ENCODE measurements at regions of chr12 and their contacts with region 1.

Region 1: DNA sequence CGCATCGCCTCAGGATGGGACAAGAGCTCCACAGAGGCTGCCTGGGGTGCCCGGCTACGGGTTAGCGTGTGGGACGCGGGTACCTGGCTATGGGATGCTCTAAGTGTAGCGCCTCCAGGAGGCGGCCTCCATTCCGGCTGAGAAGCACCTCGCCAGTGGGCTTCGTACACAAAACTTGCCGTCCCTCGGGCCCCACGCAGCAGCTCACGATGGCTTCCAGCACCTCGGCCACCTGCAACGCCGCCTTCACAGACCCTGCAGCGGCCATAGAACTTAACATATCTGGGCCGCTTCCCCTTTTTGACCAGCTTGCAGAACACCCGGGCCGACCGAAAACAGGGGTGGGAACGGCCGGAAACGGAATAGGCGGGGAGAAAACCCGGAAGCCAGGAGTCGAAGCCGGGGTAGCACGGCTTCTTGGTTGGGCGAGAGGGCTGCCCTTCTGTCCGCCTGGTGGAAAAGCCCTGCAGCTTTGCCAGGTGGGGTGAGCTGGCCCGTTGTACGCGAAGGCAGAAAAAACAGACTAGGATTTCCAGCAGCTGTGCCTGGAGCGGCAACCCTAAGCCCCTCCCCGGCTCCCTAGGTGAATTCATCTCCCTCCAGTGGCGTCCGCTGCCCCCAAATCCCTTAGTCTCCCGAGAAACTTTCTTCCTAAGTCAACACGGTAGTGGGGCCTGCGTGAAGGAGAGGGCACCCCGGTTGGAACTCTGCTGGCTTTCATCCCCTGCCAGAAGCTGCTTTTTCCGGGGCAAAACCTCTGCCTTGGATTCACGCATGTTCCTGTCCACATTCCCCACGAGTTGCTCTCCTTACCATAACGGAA is at the start of gene BBS10:
- DNase-seq: peak; percentile 93
- ATAC-seq: peak; percentile 98 to 99
- total RNA-seq, gene BBS10: 6.5 to 9.4 TPM

Region 2: GRCh38 chr12:76083904-76084862 is 264.1 kb before region 1 on chr12 and contains the start of gene NAP1L1:
- intact Hi-C with region 1: loop called in 1 of 2 experiments (anchors 5 kb)
- DNase-seq: peak; percentile 99
- ATAC-seq: peak; percentile 95 to 97
- total RNA-seq, gene NAP1L1: 299 to 358 TPM

Region 3: GRCh38 chr12:76158518-76159321 is 189.6 kb before region 1 on chr12:
- intact Hi-C with region 1: loop called in 1 of 2 experiments (anchors 10 kb)
- DNase-seq: no peak
- ATAC-seq: peak; percentile 83 to 92

Region 4: GRCh38 chr12:76183459-76184186 is 164.7 kb before region 1 on chr12:
- intact Hi-C with region 1: loop called in 1 of 2 experiments (anchors 5 kb)
- DNase-seq: peak; percentile 56
- ATAC-seq: peak in 1 of 2 donors; percentile 88

Region 5: GRCh38 chr12:76559400-76560085 is 211.3 kb after region 1 on chr12 and contains the start of gene OSBPL8:
- intact Hi-C with region 1: loop called in 1 of 2 experiments (anchors 5 kb)
- DNase-seq: peak; percentile 96
- ATAC-seq: peak; percentile 97 to 98
- total RNA-seq, gene OSBPL8: 34.5 to 38.8 TPM

Measured in left cardiac atrium (tissue), 4 donors.